B cell (primary cell): ENCODE measurements at regions of chr15 and their contacts with region 1.

Region 1: GRCh38 chr15:74695597-74696397 is at the start of gene EDC3:
- DNase-seq: peak; percentile 90
- ATAC-seq: peak; percentile 89
- H3K4me3 ChIP-seq: peak within 1 kb of the TSS; percentile 70 to 95 (median 87)
- H3K4me3 Mint-ChIP-seq: peak within 1 kb of the TSS; percentile 100
- H3K27ac ChIP-seq: peak within 1 kb of the TSS; percentile 63 to 87
- H3K27ac Mint-ChIP-seq: peak within 1 kb of the TSS; percentile 97
- H3K4me1 ChIP-seq: peaks cover 14 to 16% of the 10 kb centered on the region in 2 donors
- H3K4me1 Mint-ChIP-seq: peaks cover 33% of the 10 kb centered on the region
- H3K27me3 ChIP-seq: peaks cover 0 to 3% (median 0%) of the 10 kb centered on the region in 4 experiments
- H3K27me3 Mint-ChIP-seq: no peaks in the 10 kb centered on the region
- CTCF ChIP-seq: no peak
- total RNA-seq, gene EDC3: 47.8 and 55.4 TPM in 2 replicates

Region 2: DNA sequence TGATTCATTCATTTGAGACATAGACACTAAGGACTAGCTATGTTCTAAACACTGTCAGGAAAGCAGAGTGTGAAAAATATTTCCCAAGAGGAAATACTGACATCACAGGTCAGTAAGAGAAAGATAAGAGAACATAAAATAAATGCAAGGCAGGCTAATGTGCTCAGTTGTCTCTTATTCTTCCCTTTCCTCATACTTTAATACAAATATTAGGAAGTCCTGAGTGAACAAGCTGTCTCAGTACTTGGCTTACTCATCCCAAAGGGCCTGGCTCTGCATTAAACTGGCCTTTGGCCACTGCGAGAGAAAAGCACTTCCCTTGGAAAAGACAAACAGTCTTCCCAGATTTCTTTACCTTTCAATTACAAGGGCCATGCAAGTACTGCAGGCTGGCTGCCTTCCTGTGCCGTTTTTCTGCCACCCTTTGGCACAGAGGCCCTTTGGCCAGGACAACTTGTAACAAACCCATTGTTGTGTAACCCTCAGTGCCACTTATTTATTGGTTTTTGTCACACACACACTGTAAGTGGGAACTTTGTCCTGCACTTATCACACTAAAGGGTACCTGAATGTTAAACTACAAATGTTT is 31.7 kb before region 1 on chr15:
- CTCF ChIA-PET with region 1: no interaction called
- POLR2A ChIA-PET with region 1: no interaction called
- intact Hi-C with region 1: no loop called
- DNase-seq: no peak
- ATAC-seq: no peak
- H3K4me3 ChIP-seq: no peak overlapping the region
- H3K4me3 Mint-ChIP-seq: no peak overlapping the region
- H3K27ac ChIP-seq: no peak overlapping the region
- H3K27ac Mint-ChIP-seq: no peak overlapping the region
- H3K4me1 ChIP-seq: no peaks in the 10 kb centered on the region
- H3K4me1 Mint-ChIP-seq: peaks cover 3% of the 10 kb centered on the region
- H3K27me3 ChIP-seq: no peaks in the 10 kb centered on the region
- H3K27me3 Mint-ChIP-seq: no peaks in the 10 kb centered on the region
- CTCF ChIP-seq: no peak

Region 3: GRCh38 chr15:74723754-74724334 is 28.0 kb after region 1 on chr15:
- CTCF ChIA-PET with region 1: no interaction called
- POLR2A ChIA-PET with region 1: no interaction called
- intact Hi-C with region 1: loop called (anchors 2 kb)
- DNase-seq: no peak
- ATAC-seq: no peak
- H3K4me3 ChIP-seq: no peak overlapping the region
- H3K4me3 Mint-ChIP-seq: no peak overlapping the region
- H3K27ac ChIP-seq: no peak overlapping the region
- H3K27ac Mint-ChIP-seq: no peak overlapping the region
- H3K4me1 ChIP-seq: peaks cover 14 to 16% of the 10 kb centered on the region in 2 donors
- H3K4me1 Mint-ChIP-seq: peaks cover 15% of the 10 kb centered on the region
- H3K27me3 ChIP-seq: peaks cover 0 to 35% (median 17%) of the 10 kb centered on the region in 4 experiments
- H3K27me3 Mint-ChIP-seq: peaks cover 44% of the 10 kb centered on the region
- CTCF ChIP-seq: no peak

Region 4: DNA sequence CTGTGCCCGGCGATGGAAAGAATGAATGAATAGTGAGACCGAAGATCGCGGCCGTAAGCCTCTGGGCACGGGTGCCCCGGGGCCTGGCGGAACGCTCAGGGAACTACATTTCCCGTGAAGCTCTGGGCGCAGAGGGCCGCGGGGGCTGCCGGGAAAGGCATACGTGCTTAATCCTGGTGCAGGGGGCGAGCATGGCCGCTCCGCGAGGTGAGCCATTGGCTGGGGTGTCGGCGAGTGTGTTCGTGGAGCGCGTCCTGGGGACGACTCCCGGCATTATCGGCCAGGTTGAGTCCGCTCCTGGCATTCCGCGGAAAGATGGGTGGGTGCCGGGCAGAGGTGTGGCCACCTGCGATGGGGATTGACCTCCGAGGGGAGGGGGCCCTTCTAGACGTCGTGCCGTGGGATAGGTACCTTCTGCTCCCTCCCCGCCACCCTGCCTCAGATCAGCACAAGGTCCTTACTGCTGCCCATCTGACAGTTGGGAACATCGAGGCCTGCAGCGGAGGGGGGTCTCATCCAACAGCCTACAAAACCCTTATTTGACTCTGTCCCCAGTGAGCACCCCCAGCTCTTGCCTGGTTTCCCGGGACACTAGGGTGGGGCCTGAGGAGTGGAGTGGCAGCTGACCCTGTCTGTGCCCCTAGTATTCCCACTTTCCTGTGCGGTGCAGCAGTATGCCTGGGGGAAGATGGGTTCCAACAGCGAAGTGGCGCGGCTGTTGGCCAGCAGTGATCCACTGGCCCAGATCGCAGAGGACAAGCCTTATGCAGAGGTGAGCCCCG is 194.3 kb after region 1 on chr15 and contains the start of gene MPI:
- CTCF ChIA-PET with region 1: no interaction called
- POLR2A ChIA-PET with region 1: no interaction called
- intact Hi-C with region 1: loop called (anchors 1 kb)
- DNase-seq: peak; percentile 87
- ATAC-seq: peak; percentile 99
- H3K4me3 ChIP-seq: peak within 1 kb of the TSS; percentile 53 to 94 (median 87)
- H3K4me3 Mint-ChIP-seq: peak within 1 kb of the TSS; percentile 93
- H3K27ac ChIP-seq: peak within 1 kb of the TSS; percentile 74 to 77
- H3K27ac Mint-ChIP-seq: peak within 1 kb of the TSS; percentile 74
- H3K4me1 ChIP-seq: peaks cover 25 to 38% of the 10 kb centered on the region in 2 donors
- H3K4me1 Mint-ChIP-seq: peaks cover 39% of the 10 kb centered on the region
- H3K27me3 ChIP-seq: no peaks in the 10 kb centered on the region
- H3K27me3 Mint-ChIP-seq: no peaks in the 10 kb centered on the region
- CTCF ChIP-seq: no peak
- total RNA-seq, gene MPI: 37.2 and 41.3 TPM in 2 replicates